ENCODE measurements at regions of chr5 and their contacts with region 1.

Region 1: DNA sequence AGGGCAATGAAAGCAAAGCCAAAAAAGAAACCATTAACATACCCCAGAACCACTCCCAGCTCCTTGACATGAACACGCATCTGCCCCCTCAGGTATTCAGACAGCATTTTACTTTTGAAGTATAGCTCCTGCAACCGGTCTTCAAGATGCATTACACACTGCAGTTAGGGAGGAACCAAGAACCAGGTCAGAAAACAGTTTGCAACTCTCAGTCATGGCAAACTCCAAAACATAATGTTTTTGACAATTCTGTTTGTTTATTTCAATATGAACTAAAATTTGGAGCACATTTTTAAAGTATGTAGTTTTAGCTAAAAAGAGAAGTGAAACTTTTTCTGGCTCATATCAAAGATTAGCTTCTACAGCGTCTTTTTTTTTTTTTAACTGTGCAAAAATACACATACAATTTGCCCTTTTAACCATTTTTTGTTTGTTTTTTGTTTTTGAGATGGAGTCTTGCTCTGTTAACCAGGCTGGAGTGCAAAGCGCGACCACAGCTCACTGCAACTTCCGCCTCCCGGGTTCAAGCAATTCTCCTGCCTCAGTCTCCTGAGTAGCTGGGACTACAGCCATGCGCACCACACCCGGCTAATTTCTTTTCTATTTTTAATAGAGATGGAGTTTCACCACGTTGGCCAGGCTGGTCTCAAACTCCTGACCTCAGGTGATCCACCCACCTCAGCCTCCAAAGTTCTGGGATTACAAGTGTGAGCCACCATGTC is 12.2 kb upstream of the RAPGEF6 start:
- DNase-seq: peak; percentile 75
- ATAC-seq: peak; percentile 88
- H3K4me3 ChIP-seq: peak overlapping the region; percentile 2 to 63 (median 45)
- H3K4me3 Mint-ChIP-seq: peak overlapping the region; percentile 67
- H3K27ac ChIP-seq: peak overlapping the region; percentile 55 to 70
- H3K27ac Mint-ChIP-seq: peak overlapping the region; percentile 94
- H3K4me1 ChIP-seq: peaks cover 16 to 22% of the 10 kb centered on the region in 2 donors
- H3K4me1 Mint-ChIP-seq: peaks cover 31% of the 10 kb centered on the region
- H3K27me3 ChIP-seq: no peaks in the 10 kb centered on the region
- H3K27me3 Mint-ChIP-seq: no peaks in the 10 kb centered on the region
- CTCF ChIP-seq: peak; percentile 50

Region 2: GRCh38 chr5:131661931-131662330 is 14.7 kb after region 1 on chr5:
- CTCF ChIA-PET with region 1: interaction called, 10 read pairs
- POLR2A ChIA-PET with region 1: no interaction called
- intact Hi-C with region 1: no loop called
- DNase-seq: no peak
- ATAC-seq: no peak
- H3K4me3 ChIP-seq: no peak overlapping the region
- H3K4me3 Mint-ChIP-seq: no peak overlapping the region
- H3K27ac ChIP-seq: no peak overlapping the region
- H3K27ac Mint-ChIP-seq: no peak overlapping the region
- H3K4me1 ChIP-seq: no peaks in the 10 kb centered on the region
- H3K4me1 Mint-ChIP-seq: no peaks in the 10 kb centered on the region
- H3K27me3 ChIP-seq: no peaks in the 10 kb centered on the region
- H3K27me3 Mint-ChIP-seq: no peaks in the 10 kb centered on the region
- CTCF ChIP-seq: no peak